K562 (cell line): ENCODE measurements at regions of chr14 and their contacts with region 1.

Region 1: DNA sequence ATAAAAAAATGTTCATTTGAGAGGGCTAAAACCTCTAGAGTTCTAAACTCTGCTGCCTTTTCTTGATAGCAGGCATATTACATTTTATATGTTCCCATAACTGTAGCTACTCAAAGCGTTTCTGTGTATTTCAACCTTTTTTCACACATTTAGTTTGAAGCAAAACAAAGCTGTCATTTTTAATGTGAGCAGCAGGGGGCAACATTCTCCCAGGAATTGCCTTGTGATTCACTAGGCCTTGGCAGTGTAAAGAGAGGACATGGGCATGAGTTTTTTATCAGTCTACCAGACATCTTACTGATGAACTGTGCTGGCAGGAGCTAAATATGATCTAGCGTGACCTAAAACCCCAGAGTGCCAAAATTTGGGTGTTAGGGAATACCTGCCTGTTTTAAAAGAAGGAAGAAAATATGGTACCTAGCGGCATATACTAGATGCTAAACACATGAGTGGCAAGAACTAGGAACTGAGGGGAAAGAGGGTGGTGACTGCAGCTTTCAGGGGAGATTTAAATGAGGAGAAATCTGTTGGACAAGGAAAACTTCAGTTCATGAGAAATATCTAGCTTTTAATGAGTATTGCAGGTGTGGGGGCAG is 65.3 kb downstream of the IFT43 start:
- DNase-seq: peak; percentile 33 to 56 (median 42)
- ATAC-seq: peak; percentile 69
- H3K4me3 ChIP-seq: no peak overlapping the region
- H3K27ac ChIP-seq: no peak overlapping the region
- H3K4me1 ChIP-seq: no peaks in the 10 kb centered on the region
- H3K27me3 ChIP-seq: peaks cover 0 to 3% of the 10 kb centered on the region in 2 experiments; a peak in 1 of 5 replicates
- CTCF ChIP-seq: peak; percentile 56 to 84 (median 60); a peak in 5 of 6 replicates
- EP300 ChIP-seq: no peak
- POLR2A ChIP-seq: no peak
- RAD21 ChIP-seq: peak; percentile 84 to 88

Region 2: DNA sequence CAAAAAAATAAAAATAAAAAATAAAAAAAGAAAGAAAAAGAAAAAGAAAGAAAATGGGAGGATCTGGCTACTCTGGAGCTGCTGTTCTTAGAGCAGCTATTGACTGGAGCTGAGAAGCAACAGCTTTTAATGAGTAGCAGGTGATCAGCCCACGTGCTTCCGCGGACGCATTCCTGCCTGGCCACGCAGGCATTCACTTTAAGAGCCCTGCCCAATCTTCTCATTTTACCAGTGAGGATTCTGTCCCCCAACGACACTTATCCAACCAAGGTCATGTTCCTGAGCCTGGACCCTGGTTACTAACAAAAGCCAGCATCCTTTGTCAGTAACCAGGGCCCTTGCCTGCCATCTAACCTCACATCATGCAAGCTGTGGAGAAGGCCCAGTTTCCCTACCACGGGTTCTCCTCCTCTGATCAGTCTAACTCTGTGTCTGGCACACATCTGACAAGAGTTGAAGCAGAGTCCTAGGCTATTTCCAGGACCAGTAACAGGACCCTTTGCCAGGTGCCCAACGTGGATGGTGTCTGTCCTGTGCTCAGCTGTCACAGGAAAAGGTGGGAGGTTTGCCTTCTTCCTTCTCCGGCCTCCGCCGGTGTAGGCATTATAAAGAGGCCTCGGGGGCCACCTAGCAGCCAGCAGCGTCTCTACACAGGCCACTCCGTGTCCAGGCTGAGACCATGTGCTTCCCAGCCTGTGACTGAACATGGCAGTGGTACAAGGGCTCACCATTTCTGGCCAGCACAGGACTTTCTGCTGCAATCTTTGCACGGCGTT is 39.9 kb after region 1 on chr14:
- CTCF ChIA-PET with region 1: interaction called, 6 read pairs
- POLR2A ChIA-PET with region 1: interaction called, 3 read pairs
- in situ Hi-C with region 1: no loop called
- intact Hi-C with region 1: loop called (anchors 1 kb)
- DNase-seq: peak; percentile 54 to 73 (median 61)
- ATAC-seq: peak; percentile 99
- H3K4me3 ChIP-seq: no peak overlapping the region
- H3K27ac ChIP-seq: no peak overlapping the region
- H3K4me1 ChIP-seq: no peaks in the 10 kb centered on the region; a peak in 1 of 5 replicates
- H3K27me3 ChIP-seq: peaks cover 5 to 20% of the 10 kb centered on the region in 2 experiments; a peak in 3 of 5 replicates
- CTCF ChIP-seq: peak; percentile 61 to 65 (median 62)
- EP300 ChIP-seq: no peak
- POLR2A ChIP-seq: no peak
- RAD21 ChIP-seq: peak; percentile 36 to 73

Region 3: GRCh38 chr14:76375947-76376404 is 325.1 kb after region 1 on chr14 and contains the start of gene ESRRB:
- CTCF ChIA-PET with region 1: no interaction called
- POLR2A ChIA-PET with region 1: no interaction called
- in situ Hi-C with region 1: loop called (anchors 10 kb)
- intact Hi-C with region 1: no loop called
- DNase-seq: no peak
- ATAC-seq: no peak
- H3K4me3 ChIP-seq: no peak within 1 kb of the TSS
- H3K27ac ChIP-seq: no peak within 1 kb of the TSS
- H3K4me1 ChIP-seq: no peaks in the 10 kb centered on the region; a peak in 1 of 5 replicates
- H3K27me3 ChIP-seq: no peaks in the 10 kb centered on the region
- CTCF ChIP-seq: no peak
- EP300 ChIP-seq: no peak
- POLR2A ChIP-seq: no peak
- RAD21 ChIP-seq: no peak
- polyA plus RNA-seq, gene ESRRB: 3.2 to 3.9 TPM

Region 4: DNA sequence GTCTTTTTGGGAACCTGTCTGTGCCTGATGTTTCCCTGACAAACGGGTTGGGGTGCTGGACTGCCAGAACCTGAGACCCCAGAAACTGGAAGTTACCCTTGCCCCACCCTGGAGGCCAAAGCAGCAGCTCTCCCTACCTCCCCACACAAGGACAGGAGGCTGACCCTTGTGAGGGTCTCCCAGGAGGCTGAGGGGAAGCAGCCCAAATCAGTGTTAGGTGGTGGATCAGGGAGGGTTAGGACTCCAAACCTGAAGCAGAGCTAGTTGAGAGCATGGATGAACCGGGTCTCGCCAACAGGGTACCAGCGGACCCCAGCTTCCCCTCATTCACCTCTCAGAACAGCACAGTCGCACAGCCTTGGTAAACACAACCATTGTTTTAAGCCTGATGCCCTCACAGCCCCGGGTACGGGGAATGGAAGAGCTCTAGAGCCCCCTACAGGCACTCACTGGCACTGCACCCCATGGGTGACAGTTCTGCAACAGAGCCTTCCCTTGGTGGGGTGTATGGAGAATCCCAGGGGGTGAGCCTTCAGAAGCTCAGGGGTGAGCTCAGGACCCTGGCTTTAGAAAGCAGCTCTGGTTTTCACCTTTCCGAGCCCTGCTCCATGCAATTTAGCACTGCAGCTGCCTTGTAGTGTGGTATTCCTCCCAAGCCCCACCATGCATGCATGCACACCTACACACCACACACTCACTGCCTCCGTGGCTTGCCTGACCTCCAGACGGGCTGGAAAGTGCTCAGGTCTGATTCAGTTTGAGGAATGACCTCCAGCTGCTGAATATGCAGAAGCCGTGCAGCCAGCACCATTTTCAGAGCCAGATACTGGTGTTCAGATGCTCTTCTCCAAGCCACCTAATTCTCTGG is 336.3 kb after region 1 on chr14:
- CTCF ChIA-PET with region 1: interaction called, 9 read pairs
- POLR2A ChIA-PET with region 1: no interaction called
- in situ Hi-C with region 1: loop called (anchors 10 kb)
- intact Hi-C with region 1: loop called (anchors 2 kb)
- DNase-seq: peak; percentile 65 to 77 (median 76)
- ATAC-seq: peak; percentile 97
- H3K4me3 ChIP-seq: no peak overlapping the region
- H3K27ac ChIP-seq: no peak overlapping the region
- H3K4me1 ChIP-seq: no peaks in the 10 kb centered on the region; a peak in 1 of 5 replicates
- H3K27me3 ChIP-seq: no peaks in the 10 kb centered on the region
- CTCF ChIP-seq: peak; percentile 83 to 92 (median 84)
- EP300 ChIP-seq: no peak
- POLR2A ChIP-seq: no peak
- RAD21 ChIP-seq: peak; percentile 74 to 78

Region 5: GRCh38 chr14:76546426-76547221 is 495.7 kb after region 1 on chr14:
- CTCF ChIA-PET with region 1: interaction called, 3 read pairs
- POLR2A ChIA-PET with region 1: no interaction called
- in situ Hi-C with region 1: no loop called
- intact Hi-C with region 1: loop called (anchors 10 kb)
- DNase-seq: peak; percentile 50 to 62 (median 58)
- ATAC-seq: peak; percentile 88
- H3K4me3 ChIP-seq: no peak overlapping the region
- H3K27ac ChIP-seq: no peak overlapping the region
- H3K4me1 ChIP-seq: no peaks in the 10 kb centered on the region
- H3K27me3 ChIP-seq: peaks cover 2 to 30% of the 10 kb centered on the region in 2 experiments; a peak in 3 of 5 replicates
- CTCF ChIP-seq: peak; percentile 60 to 86 (median 69)
- EP300 ChIP-seq: no peak
- POLR2A ChIP-seq: no peak
- RAD21 ChIP-seq: peak in 1 of 2 experiments; percentile 67; a peak in 2 of 4 replicates

Region 6: GRCh38 chr14:76647697-76648298 is 596.9 kb after region 1 on chr14:
- CTCF ChIA-PET with region 1: interaction called, 8 read pairs
- POLR2A ChIA-PET with region 1: no interaction called
- in situ Hi-C with region 1: loop called (anchors 10 kb)
- intact Hi-C with region 1: loop called (anchors 5 kb)
- DNase-seq: peak; percentile 53 to 61 (median 54)
- ATAC-seq: peak; percentile 93
- H3K4me3 ChIP-seq: no peak overlapping the region
- H3K27ac ChIP-seq: no peak overlapping the region
- H3K4me1 ChIP-seq: no peaks in the 10 kb centered on the region
- H3K27me3 ChIP-seq: peaks cover 6 to 31% of the 10 kb centered on the region in 2 experiments; a peak in 3 of 5 replicates
- CTCF ChIP-seq: peak; percentile 69 to 71 (median 70)
- EP300 ChIP-seq: no peak
- POLR2A ChIP-seq: no peak
- RAD21 ChIP-seq: peak; percentile 27 to 71; a peak in 3 of 4 replicates

Region 7: GRCh38 chr14:76654573-76655090 is 603.7 kb after region 1 on chr14:
- CTCF ChIA-PET with region 1: no interaction called
- POLR2A ChIA-PET with region 1: no interaction called
- in situ Hi-C with region 1: loop called (anchors 10 kb)
- intact Hi-C with region 1: loop called (anchors 5 kb)
- DNase-seq: no peak
- ATAC-seq: no peak
- H3K4me3 ChIP-seq: no peak overlapping the region
- H3K27ac ChIP-seq: no peak overlapping the region
- H3K4me1 ChIP-seq: no peaks in the 10 kb centered on the region
- H3K27me3 ChIP-seq: peaks cover 0 to 26% of the 10 kb centered on the region in 2 experiments; a peak in 3 of 5 replicates
- CTCF ChIP-seq: no peak
- EP300 ChIP-seq: no peak
- POLR2A ChIP-seq: no peak
- RAD21 ChIP-seq: no peak